Left cardiac atrium (tissue), 4 donors: ENCODE measurements at regions of chr9 and their contacts with region 1.

Region 1: GRCh38 chr9:73183917-73184861 is 32.5 kb downstream of the ANXA1 start:
- DNase-seq: no peak
- ATAC-seq: no peak

Region 2: DNA sequence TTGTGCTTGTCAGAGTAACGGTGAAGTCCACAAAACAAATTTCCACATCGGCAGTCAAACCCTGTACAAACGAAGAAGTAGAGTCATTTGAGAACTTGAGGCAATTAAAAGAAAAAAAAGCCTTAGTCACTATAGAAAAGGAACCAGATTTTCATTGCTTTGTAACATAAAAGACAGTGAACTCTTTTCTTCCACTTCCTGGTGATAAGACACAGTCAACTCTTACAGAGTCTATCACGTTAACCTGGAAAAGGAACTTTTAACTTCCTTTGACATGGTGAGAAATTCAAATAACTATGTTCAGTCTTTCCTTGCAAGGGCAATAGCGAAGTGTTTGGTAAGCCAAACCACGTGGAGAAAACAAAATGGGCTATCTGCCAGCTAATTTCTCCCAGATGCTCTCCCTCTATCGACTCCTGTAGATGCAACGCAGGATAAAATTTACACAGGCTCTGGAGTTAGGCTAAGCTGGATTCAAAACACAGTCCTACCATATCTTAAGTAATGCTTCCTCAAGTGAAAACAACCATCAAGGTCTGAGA is 828.1 kb before region 1 on chr9:
- intact Hi-C with region 1: no loop called
- DNase-seq: no peak
- ATAC-seq: peak in 1 of 2 donors; percentile 54

Region 3: DNA sequence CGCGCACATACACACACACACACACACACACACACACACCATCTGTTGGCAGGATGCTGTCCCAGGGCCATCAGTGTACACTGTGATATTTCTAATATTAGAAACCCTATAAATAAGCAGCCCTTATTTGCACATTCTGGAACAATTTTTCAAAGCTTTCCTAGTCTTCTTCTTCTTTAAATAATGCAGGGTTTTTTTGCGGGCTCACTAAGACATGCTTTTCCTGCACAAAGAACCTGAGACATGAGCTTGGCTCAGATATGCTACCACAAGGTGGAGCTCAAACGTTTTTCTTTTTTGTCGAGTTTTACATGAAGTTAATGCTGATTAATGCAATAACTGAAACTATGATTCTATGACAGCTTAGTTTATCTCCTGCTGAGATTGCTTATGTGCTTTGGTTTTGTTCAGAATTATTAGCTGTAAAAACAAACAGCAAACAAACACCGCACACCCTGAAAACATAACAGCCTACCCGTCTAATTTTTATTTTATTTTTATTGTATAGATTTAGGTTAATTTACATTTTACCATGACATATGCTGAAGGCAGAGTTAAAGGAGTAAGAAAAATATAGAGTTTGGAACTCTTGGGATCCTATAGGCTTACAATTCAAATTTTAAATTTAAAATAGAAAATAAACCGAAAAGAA is 327.1 kb before region 1 on chr9:
- intact Hi-C with region 1: loop called in 1 of 2 experiments (anchors 10 kb)
- DNase-seq: no peak
- ATAC-seq: peak; percentile 75 to 77

Region 4: GRCh38 chr9:73104342-73104741 is 79.8 kb before region 1 on chr9:
- intact Hi-C with region 1: loop called (anchors 2 to 5 kb)
- DNase-seq: no peak
- ATAC-seq: no peak